ENCODE measurements at regions of chr17 and their contacts with region 1.

Region 1: DNA sequence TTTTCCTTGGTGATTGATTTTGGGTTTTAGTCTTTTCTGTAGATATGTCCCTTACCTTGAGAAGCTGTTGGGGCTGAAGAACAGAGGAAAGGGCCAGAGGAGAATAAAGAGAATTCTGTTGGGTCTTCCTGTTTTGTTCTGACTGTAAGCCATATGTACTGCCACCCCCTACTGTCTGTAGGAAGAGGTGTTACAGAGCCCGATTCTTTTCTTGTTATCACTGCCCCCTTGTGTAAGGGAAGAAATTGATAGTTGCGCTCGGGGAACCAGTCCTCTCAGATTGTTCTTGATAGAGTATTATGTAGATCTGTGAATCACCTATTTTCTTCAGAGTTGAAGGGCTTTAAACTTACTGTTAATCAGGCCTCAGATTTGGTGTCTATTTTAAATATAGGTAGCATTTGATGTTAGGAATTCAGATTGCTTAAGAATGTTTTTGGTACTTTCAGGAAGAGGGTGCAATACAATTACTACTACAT is 2.4 kb downstream of the TANC2 start:
- DNase-seq: peak; percentile 37 to 90
- H3K4me3 ChIP-seq: no peak overlapping the region
- H3K27ac ChIP-seq: no peak overlapping the region
- H3K4me1 ChIP-seq: peaks cover 4 to 41% (median 32%) of the 10 kb centered on the region in 4 donors
- H3K27me3 ChIP-seq: no peaks in the 10 kb centered on the region
- CTCF ChIP-seq: peak in 5 of 7 experiments; percentile 64 to 95 (median 73)
- EP300 ChIP-seq: no peak
- POLR2A ChIP-seq: no peak

Region 2: DNA sequence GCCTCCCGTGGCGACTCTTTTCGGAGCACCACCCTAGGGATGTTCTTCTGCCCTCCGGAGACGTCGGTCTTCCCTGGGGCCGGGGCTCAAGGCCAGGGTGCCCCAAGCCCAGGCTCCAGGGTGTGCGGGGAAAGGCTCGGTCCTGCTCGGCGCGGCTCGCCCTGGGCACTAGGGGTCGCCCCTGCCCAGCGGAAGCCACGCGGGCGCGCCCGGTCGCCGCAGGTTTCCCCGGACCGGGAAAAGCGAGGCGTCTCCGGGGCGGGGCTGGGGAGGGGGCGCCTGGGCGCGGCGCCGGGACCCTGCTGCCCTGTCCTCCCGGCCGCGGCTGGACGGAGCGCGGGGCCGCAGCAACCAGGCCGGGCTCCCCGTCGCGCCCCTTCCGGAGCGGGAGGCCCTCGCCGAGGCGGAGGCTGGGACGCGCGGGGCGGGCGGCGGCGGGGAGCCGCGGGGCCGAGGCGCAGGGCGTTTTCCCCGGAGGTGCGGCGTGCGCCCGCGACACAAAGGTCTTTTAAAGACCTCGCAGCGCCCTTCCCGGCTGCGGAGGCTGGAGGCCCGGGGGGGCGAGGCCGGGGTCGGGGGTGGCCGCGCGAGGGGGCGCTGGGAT is 264.6 kb before region 1 on chr17:
- intact Hi-C with region 1: loop called (anchors 5 kb)
- DNase-seq: peak; percentile 83 to 91
- H3K4me3 ChIP-seq: peak overlapping the region; percentile 65 to 72 (median 69)
- H3K27ac ChIP-seq: peak overlapping the region; percentile 59 to 88 (median 81)
- H3K4me1 ChIP-seq: peaks cover 16 to 34% (median 28%) of the 10 kb centered on the region in 4 donors
- H3K27me3 ChIP-seq: peaks cover 0 to 8% (median 0%) of the 10 kb centered on the region in 3 donors
- CTCF ChIP-seq: peak in 5 of 7 experiments; percentile 60 to 89 (median 76)
- EP300 ChIP-seq: no peak
- POLR2A ChIP-seq: no peak

Region 3: DNA sequence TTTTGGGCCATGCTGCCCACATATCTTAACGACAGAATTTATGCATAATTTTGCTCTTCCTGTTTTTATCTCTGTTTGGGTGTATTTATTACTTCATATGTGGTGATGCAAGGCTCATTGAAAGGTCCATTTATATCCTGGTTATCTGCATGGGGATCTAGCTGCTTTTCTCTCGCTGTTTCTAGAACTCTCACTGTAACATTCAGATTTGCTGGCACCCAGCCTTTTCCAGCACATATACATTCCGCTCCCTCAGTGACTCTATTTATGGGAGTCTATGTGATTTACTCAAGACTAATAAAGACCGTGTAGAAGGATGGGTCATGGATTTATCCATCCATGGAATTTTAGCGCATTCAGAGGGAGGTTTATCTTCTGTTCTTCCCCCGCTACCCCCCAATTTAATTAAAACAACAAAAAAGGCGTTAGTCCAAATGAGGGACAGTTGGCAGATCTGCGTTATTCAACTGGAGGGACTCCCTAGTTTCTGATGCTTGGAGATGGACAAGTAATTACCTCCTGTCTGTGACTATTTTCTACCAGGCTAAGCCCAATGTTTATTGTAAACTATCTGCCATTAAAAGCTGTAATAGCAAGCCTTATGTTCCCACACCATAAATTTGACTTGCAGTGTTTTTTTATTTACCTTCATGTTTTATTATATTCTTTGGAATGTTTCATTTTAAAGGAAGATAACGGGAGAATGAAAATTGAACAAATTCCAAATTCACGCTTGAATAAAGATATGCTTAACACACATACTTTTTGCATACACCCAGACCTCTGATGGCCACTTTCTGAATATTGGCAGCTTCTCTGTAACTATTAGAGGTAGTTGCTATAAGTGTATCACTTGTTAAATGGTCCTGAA is 140.5 kb before region 1 on chr17:
- intact Hi-C with region 1: no loop called
- DNase-seq: peak in 1 of 2 donors; percentile 54
- H3K4me3 ChIP-seq: no peak overlapping the region
- H3K27ac ChIP-seq: no peak overlapping the region
- H3K4me1 ChIP-seq: peaks cover 0 to 11% (median 3%) of the 10 kb centered on the region in 4 donors
- H3K27me3 ChIP-seq: no peaks in the 10 kb centered on the region
- CTCF ChIP-seq: no peak
- EP300 ChIP-seq: no peak
- POLR2A ChIP-seq: no peak

Region 4: GRCh38 chr17:63035271-63035670 is 66.8 kb after region 1 on chr17:
- intact Hi-C with region 1: no loop called
- DNase-seq: no peak
- H3K4me3 ChIP-seq: no peak overlapping the region
- H3K27ac ChIP-seq: no peak overlapping the region
- H3K4me1 ChIP-seq: peaks cover 0 to 16% (median 8%) of the 10 kb centered on the region in 4 donors
- H3K27me3 ChIP-seq: no peaks in the 10 kb centered on the region
- CTCF ChIP-seq: no peak
- EP300 ChIP-seq: no peak
- POLR2A ChIP-seq: no peak

Measured in stomach (tissue), 19 donors.